Activated B cell treated with CpG ODN at 0.5 μM for 24 hours (primary cell): ENCODE measurements at regions of chr19 and their contacts with region 1.

Region 1: GRCh38 chr19:57279418-57280066 is 743 bp upstream of the ZNF460 start:
- DNase-seq: peak; percentile 62
- ATAC-seq: peak; percentile 72
- H3K4me3 Mint-ChIP-seq: no peak overlapping the region
- H3K27ac Mint-ChIP-seq: no peak overlapping the region
- H3K4me1 Mint-ChIP-seq: peaks cover 44% of the 10 kb centered on the region
- H3K27me3 Mint-ChIP-seq: no peaks in the 10 kb centered on the region
- CTCF ChIP-seq: no peak

Region 2: GRCh38 chr19:56140583-56141416 is 1138.7 kb before region 1 on chr19 and contains the start of gene ZNF444:
- CTCF ChIA-PET with region 1: no interaction called
- POLR2A ChIA-PET with region 1: no interaction called
- intact Hi-C with region 1: loop called (anchors 5 kb)
- DNase-seq: peak; percentile 96
- ATAC-seq: peak; percentile 86
- H3K4me3 Mint-ChIP-seq: peak within 1 kb of the TSS; percentile 98
- H3K27ac Mint-ChIP-seq: peak within 1 kb of the TSS; percentile 99
- H3K4me1 Mint-ChIP-seq: peaks cover 29% of the 10 kb centered on the region
- H3K27me3 Mint-ChIP-seq: no peaks in the 10 kb centered on the region
- CTCF ChIP-seq: no peak
- total RNA-seq, gene ZNF444: 28.1 and 32.1 TPM in 2 replicates

Region 3: DNA sequence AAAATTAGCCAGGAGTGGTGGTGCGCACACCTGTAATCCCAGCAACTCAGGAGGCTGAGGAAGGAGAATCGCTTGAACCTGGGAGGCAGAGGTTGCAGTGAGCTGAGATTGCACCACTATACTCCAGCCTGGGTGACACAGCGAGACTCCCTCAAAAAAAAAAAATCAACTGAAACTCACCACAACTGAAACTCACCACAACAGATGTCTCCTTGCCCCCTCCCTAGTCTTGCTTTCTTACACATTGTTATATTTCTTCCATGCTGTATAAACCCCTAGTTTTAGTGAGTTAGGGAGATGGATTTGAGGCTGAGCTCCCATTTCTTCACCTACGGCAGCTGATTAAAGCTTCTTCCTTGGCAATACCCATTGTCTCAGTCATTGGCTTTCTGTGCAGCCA is 137.8 kb before region 1 on chr19:
- CTCF ChIA-PET with region 1: no interaction called
- POLR2A ChIA-PET with region 1: no interaction called
- intact Hi-C with region 1: no loop called
- DNase-seq: no peak
- ATAC-seq: no peak
- H3K4me3 Mint-ChIP-seq: no peak overlapping the region
- H3K27ac Mint-ChIP-seq: no peak overlapping the region
- H3K4me1 Mint-ChIP-seq: no peaks in the 10 kb centered on the region
- H3K27me3 Mint-ChIP-seq: no peaks in the 10 kb centered on the region
- CTCF ChIP-seq: no peak

Region 4: DNA sequence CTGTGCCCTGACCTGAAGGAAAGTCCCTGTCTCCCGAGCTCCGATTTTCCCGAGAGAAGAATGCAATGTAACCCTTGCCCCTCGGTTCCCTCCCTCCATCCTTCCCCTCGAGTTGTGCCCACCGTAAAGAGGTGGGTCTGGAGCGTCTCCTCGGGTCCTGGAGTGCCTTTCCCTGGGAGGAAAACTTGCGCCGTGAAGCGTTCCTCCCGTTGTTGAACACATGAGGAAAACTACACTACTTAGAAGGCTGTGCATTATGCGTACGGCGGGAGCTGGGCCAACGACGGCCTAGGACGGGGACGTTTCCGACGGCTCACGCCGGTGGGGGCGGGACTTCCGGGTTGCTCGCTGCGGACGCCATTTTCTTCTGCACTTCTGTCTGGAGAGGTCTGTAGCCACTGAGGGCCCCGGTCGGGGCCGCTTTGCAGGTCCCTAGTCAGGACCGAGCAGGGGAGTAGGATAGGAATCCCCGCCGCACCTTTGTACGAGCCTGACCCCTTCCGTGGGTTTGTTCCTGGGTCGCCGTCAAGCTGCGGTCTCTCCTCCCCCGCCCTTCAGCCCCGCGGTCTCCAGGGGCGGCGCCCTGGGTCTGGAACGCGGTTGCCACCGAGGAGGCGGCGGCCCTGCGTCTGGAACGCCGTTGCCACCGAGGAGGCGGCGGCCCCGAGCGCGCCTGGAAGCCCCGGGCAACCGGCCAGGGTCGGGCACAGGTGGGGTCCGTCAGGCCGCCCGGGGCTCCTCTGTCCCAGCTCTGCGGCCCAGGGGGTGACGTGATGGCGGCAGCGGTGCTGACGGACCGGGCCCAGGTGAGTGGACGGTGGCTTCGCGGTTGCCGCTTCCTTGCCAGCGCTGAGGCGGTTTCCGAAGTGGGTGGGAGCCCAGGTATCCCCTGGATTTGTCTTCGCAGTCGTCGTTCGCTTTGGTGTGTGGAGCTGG is 88.1 kb before region 1 on chr19 and contains the start of gene ZNF264:
- CTCF ChIA-PET with region 1: no interaction called
- POLR2A ChIA-PET with region 1: interaction called, 8 read pairs
- intact Hi-C with region 1: loop called (anchors 1 kb)
- DNase-seq: peak; percentile 88
- ATAC-seq: peak; percentile 99
- H3K4me3 Mint-ChIP-seq: peak within 1 kb of the TSS; percentile 92
- H3K27ac Mint-ChIP-seq: peak within 1 kb of the TSS; percentile 94
- H3K4me1 Mint-ChIP-seq: peaks cover 36% of the 10 kb centered on the region
- H3K27me3 Mint-ChIP-seq: peaks cover 5% of the 10 kb centered on the region
- CTCF ChIP-seq: no peak
- total RNA-seq, gene ZNF264: 56.2 and 58.7 TPM in 2 replicates

Region 5: DNA sequence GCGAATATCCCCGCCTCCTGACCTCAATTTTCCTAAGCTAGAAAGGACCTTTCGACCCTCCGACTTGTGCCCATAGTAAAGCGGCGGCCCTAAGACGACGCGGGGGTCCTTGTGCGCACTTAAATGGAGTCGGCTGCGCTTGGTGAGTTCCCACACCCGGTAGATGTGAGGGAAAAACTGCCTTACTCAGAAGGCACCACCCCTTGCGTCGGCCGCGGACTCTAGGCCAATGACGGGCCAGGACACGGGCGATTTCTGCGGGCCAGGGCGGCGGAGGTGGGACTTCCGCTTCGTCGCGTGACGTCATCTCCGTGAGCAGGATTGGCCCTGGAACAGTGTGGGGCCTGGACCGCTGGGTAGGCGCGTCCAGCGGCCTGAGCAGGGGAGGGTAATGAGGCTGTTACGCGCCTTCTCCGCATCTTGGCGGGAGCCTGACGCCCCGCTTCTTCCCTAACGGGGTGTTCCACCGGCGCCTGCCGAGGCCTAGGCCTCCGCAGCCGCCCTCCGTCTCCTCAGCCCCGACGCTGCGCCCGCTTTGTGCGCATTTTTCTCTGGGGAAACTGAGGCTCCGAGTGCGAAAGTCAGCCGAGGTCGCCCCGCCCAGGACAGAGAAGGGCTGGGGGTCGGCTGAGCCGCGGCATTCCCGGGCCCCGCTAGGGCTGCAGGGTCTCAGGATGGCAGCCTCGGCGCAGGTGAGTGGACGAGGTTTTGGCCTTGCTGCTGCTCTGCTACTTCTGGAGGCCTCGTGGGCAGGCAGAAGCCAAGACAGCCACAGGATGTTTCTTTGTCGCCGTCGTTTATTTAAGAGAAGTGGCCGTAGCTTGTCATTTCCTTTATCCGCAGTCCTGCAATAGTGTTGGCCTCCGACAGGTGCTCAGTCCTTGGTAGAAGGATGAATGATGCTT is 40.9 kb after region 1 on chr19 and contains the start of gene ZNF543:
- CTCF ChIA-PET with region 1: no interaction called
- POLR2A ChIA-PET with region 1: interaction called, 5 read pairs
- intact Hi-C with region 1: loop called (anchors 1 kb)
- DNase-seq: peak; percentile 90
- ATAC-seq: peak; percentile 97
- H3K4me3 Mint-ChIP-seq: peak within 1 kb of the TSS; percentile 95
- H3K27ac Mint-ChIP-seq: peak within 1 kb of the TSS; percentile 98
- H3K4me1 Mint-ChIP-seq: peaks cover 30% of the 10 kb centered on the region
- H3K27me3 Mint-ChIP-seq: peaks cover 17% of the 10 kb centered on the region
- CTCF ChIP-seq: no peak
- total RNA-seq, gene ZNF543: 14.0 and 16.1 TPM in 2 replicates

Region 6: GRCh38 chr19:57362997-57363705 is 83.6 kb after region 1 on chr19 and contains the starts of genes TRAPPC2B and ZNF547:
- CTCF ChIA-PET with region 1: no interaction called
- POLR2A ChIA-PET with region 1: interaction called, 5 read pairs
- intact Hi-C with region 1: loop called (anchors 1 kb)
- DNase-seq: peak; percentile 99
- ATAC-seq: peak; percentile 94
- H3K4me3 Mint-ChIP-seq: peak within 1 kb of the TSS; percentile 92
- H3K27ac Mint-ChIP-seq: peak within 1 kb of the TSS; percentile 95
- H3K4me1 Mint-ChIP-seq: peaks cover 17% of the 10 kb centered on the region
- H3K27me3 Mint-ChIP-seq: no peaks in the 10 kb centered on the region
- CTCF ChIP-seq: no peak
- total RNA-seq, gene TRAPPC2B: 9.7 and 10.2 TPM in 2 replicates
- total RNA-seq, gene ZNF547: 6.0 and 6.3 TPM in 2 replicates

Region 7: DNA sequence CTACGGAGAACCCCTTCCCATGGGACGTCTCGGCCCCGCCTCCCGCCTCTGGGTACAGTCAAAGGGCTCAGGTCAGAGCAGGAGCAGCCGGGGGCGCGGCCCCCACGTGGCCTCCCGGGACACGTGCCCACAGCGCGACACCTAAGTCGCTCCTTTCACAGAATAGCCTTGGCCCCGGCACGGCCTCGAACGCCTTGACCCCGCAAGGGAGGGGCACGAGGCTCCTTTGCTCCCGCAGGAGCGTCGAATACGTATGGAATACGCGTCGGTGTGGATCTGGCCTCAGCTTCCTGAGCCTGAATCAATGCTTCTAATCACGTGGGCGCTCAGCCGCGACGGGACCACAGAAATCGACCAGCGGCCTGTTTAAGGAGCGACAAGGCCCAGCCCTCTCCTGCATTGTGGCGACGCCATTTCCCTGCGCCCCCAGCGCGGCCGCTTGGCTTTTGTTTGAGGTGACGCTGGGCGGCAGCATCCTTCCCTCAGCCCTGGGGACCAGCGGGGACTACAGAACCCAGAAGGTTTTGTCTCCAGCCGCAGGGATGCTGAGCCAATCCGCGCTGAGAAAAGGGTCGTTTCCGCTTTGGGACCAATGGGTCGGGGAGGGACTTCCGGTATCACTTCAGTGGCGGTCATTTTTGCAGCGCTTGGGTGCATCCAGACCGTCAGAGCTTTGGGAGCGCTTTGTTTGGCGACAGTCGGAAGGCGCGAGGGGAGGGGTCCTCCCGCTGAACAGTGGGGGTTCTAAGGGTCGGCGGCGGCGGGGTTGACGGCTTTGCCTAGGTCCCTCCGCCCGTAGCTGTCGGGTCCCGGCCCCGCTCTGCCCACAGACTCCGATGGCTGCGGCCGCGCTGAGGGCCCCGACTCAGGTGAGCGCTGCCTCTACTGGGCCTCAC is 304.2 kb after region 1 on chr19 and contains the start of gene ZIK1:
- CTCF ChIA-PET with region 1: no interaction called
- POLR2A ChIA-PET with region 1: interaction called, 3 read pairs
- intact Hi-C with region 1: loop called (anchors 1 kb)
- DNase-seq: peak; percentile 75
- ATAC-seq: peak; percentile 88
- H3K4me3 Mint-ChIP-seq: peak within 1 kb of the TSS; percentile 91
- H3K27ac Mint-ChIP-seq: peak within 1 kb of the TSS; percentile 87
- H3K4me1 Mint-ChIP-seq: peaks cover 27% of the 10 kb centered on the region
- H3K27me3 Mint-ChIP-seq: no peaks in the 10 kb centered on the region
- CTCF ChIP-seq: no peak
- total RNA-seq, gene ZIK1: 16.2 and 18.1 TPM in 2 replicates